Heart left ventricle (tissue), 16 donors: ENCODE measurements at regions of chr7 and their contacts with region 1.

Region 1: GRCh38 chr7:48109848-48110663 is 21.0 kb downstream of the UPP1 start:
- DNase-seq: peak; percentile 64 to 87 (median 70)
- ATAC-seq: peak in 3 of 4 donors; percentile 67 to 82 (median 79)
- H3K4me3 ChIP-seq: no peak overlapping the region
- H3K27ac ChIP-seq: peak overlapping the region in 1 of 12 donors; percentile 12
- H3K4me1 ChIP-seq: peaks cover 0 to 7% (median 0%) of the 10 kb centered on the region in 12 donors
- H3K27me3 ChIP-seq: no peaks in the 10 kb centered on the region
- CTCF ChIP-seq: peak; percentile 97 to 100 (median 99)
- POLR2A ChIP-seq: no peak

Region 2: GRCh38 chr7:47792521-47793121 is 317.4 kb before region 1 on chr7:
- intact Hi-C with region 1: loop called in 1 of 10 experiments (anchors 10 kb)
- DNase-seq: no peak
- ATAC-seq: peak in 1 of 4 donors; percentile 54
- H3K4me3 ChIP-seq: no peak overlapping the region
- H3K27ac ChIP-seq: no peak overlapping the region
- H3K4me1 ChIP-seq: no peaks in the 10 kb centered on the region
- H3K27me3 ChIP-seq: no peaks in the 10 kb centered on the region
- CTCF ChIP-seq: peak; percentile 19 to 61 (median 52)
- POLR2A ChIP-seq: no peak

Region 3: GRCh38 chr7:47852330-47853245 is 257.5 kb before region 1 on chr7:
- intact Hi-C with region 1: no loop called
- DNase-seq: no peak
- ATAC-seq: peak in 3 of 4 donors; percentile 22 to 49 (median 34)
- H3K4me3 ChIP-seq: no peak overlapping the region
- H3K27ac ChIP-seq: no peak overlapping the region
- H3K4me1 ChIP-seq: no peaks in the 10 kb centered on the region
- H3K27me3 ChIP-seq: no peaks in the 10 kb centered on the region
- CTCF ChIP-seq: peak in 3 of 12 donors; percentile 8 to 29 (median 23)
- POLR2A ChIP-seq: no peak

Region 4: DNA sequence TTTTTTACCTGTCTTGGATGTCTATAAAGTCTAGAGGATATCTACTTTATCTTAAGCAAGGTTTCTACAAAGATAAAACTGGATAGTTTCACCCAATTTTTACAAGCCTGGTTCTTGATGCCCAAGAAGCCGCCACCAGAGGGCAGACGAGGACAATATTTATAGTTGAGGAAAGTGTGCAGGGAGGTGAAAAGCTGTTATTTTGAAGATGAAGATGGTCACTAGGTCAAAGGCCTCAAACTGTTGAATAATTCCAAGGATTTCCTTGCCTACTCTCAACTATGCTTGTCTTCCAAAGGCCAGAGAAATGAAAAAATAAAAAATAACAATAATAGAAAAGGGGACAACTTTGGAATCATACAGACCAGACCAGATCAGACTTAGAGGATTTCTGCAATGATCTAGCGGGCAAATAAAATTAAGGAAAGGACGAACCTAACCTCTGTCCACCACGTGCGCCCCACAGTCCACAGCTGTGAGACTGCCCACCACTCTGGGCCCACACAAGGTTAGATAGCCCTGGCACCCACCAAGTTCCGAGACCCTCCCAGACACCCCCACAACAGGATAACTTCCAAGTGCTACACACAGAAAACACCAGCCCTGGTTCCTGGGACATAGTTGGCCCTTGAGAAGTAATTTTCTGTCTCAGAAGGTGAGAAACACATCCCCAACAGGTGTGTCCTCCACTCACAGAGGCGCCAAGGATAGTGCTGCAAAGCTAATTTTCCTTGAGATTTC is 164.6 kb before region 1 on chr7:
- intact Hi-C with region 1: loop called (anchors 1 to 5 kb)
- DNase-seq: peak; percentile 70 to 88 (median 82)
- ATAC-seq: no peak
- H3K4me3 ChIP-seq: peak overlapping the region in 2 of 12 donors; percentile 6
- H3K27ac ChIP-seq: peak overlapping the region in 10 of 12 donors; percentile 44 to 93 (median 76)
- H3K4me1 ChIP-seq: peaks cover 0 to 84% (median 38%) of the 10 kb centered on the region in 12 donors
- H3K27me3 ChIP-seq: no peaks in the 10 kb centered on the region
- CTCF ChIP-seq: peak; percentile 67 to 96 (median 82)
- POLR2A ChIP-seq: no peak

Region 5: GRCh38 chr7:47991741-47992311 is 118.2 kb before region 1 on chr7:
- intact Hi-C with region 1: loop called (anchors 1 to 2 kb)
- DNase-seq: peak; percentile 87 to 95 (median 90)
- ATAC-seq: peak; percentile 97 to 100 (median 99)
- H3K4me3 ChIP-seq: peak overlapping the region; percentile 15 to 64 (median 60)
- H3K27ac ChIP-seq: peak overlapping the region in 10 of 12 donors; percentile 28 to 76 (median 53)
- H3K4me1 ChIP-seq: peaks cover 0 to 14% (median 0%) of the 10 kb centered on the region in 12 donors
- H3K27me3 ChIP-seq: no peaks in the 10 kb centered on the region
- CTCF ChIP-seq: peak; percentile 36 to 91 (median 66)
- POLR2A ChIP-seq: no peak

Region 6: GRCh38 chr7:48035301-48035966 is 74.6 kb before region 1 on chr7 and contains the start of gene C7orf57:
- intact Hi-C with region 1: loop called in 3 of 10 experiments (anchors 2 to 5 kb)
- DNase-seq: peak; percentile 93 to 97 (median 95)
- ATAC-seq: peak; percentile 99 to 100 (median 100)
- H3K4me3 ChIP-seq: peak within 1 kb of the TSS; percentile 47 to 70 (median 61)
- H3K27ac ChIP-seq: no peak within 1 kb of the TSS
- H3K4me1 ChIP-seq: peaks cover 0 to 15% (median 10%) of the 10 kb centered on the region in 12 donors
- H3K27me3 ChIP-seq: peaks cover 0 to 34% (median 6%) of the 10 kb centered on the region in 9 donors
- CTCF ChIP-seq: peak in 8 of 12 donors; percentile 8 to 57 (median 39)
- POLR2A ChIP-seq: no peak
- total RNA-seq, gene C7orf57: 0.27 TPM in 1 of 9 donors, not detected in the others